ENCODE measurements at regions of chr6 and their contacts with region 1.

Region 1: GRCh38 chr6:26156076-26156849 is 69.0 kb downstream of the HFE start:
- DNase-seq: peak; percentile 92 to 96 (median 93)
- ATAC-seq: peak; percentile 80 to 89 (median 86)
- H3K4me3 ChIP-seq: peak overlapping the region; percentile 49 to 94 (median 78)
- H3K27ac ChIP-seq: peak overlapping the region; percentile 70 to 98 (median 95)
- H3K4me1 ChIP-seq: peaks cover 0 to 30% (median 11%) of the 10 kb centered on the region in 12 donors
- H3K27me3 ChIP-seq: no peaks in the 10 kb centered on the region
- CTCF ChIP-seq: peak in 1 of 12 donors; percentile 7
- POLR2A ChIP-seq: peak; percentile 67 to 99

Region 2: DNA sequence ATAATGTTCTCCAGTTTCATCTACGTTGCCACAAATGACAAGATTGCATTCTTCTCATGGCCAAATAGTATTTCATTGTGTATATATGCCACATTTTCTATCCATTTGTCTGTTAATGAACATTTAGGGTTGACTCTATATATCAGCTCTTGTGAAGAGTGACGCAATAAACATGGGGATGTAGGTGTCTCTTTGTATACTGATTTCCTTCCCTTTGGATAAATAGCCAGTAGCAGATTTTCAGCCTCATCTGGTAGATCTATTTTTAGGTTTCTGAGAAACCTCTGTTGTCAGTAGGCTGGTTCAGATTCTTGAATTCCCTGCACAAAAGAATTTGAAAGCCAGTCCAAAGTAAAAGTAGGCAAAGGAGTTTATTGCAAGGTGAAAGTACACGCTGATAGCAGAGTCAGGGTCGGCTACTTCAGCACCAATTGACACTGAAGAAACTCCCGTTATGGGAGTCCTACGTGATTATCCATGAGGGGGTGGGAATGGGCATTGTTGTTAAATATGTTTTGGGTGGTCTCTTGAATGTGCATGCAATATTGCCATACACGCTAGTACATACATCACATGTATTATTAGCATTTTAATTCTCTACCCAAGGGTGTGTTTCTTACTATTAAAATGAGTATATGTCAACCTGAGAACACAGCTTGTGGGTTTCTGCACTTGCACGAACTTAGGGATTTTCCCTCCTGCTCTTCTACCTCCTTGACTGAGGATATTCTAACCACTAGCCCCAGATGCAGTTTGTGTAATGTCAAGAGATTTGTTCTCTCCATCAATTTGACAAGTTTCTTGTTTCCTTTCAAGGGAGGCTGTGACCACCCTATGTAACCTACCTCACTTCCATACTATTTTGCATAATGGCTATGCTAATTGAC is 211.3 kb before region 1 on chr6:
- intact Hi-C with region 1: no loop called
- DNase-seq: no peak
- ATAC-seq: no peak
- H3K4me3 ChIP-seq: no peak overlapping the region
- H3K27ac ChIP-seq: no peak overlapping the region
- H3K4me1 ChIP-seq: peaks cover 0 to 3% (median 0%) of the 10 kb centered on the region in 12 donors
- H3K27me3 ChIP-seq: no peaks in the 10 kb centered on the region
- CTCF ChIP-seq: no peak
- POLR2A ChIP-seq: no peak

Region 3: DNA sequence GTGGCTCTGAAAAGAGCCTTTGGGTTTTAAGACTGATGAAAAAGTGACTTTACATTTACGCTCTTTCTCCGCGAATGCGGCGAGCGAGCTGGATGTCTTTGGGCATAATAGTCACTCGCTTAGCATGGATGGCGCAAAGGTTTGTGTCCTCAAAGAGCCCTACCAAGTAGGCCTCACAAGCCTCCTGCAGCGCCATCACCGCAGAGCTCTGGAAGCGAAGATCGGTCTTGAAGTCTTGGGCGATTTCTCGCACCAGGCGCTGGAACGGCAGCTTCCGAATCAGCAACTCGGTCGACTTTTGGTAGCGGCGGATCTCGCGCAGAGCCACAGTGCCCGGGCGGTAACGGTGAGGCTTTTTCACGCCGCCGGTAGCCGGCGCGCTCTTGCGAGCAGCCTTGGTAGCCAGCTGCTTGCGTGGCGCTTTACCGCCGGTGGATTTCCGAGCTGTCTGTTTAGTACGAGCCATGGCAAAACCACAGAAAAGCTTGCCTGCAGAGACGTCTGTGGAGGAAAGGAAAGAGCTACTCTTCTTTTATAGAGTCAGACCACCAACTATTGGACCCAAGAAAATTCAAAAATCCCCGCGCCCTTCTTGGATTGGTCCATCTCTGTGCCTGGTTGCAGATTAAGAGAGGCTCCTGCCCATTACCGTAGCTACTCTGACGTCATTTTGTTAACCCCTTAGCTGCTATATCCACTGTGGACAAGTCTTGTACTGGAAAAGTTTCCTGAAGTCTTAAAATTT is 124.5 kb before region 1 on chr6:
- intact Hi-C with region 1: loop called in 2 of 10 experiments (anchors 5 kb)
- DNase-seq: peak; percentile 69 to 87 (median 74)
- ATAC-seq: peak; percentile 82 to 88 (median 86)
- H3K4me3 ChIP-seq: peak overlapping the region; percentile 21 to 69 (median 60)
- H3K27ac ChIP-seq: peak overlapping the region in 8 of 12 donors; percentile 58 to 87 (median 80)
- H3K4me1 ChIP-seq: peaks cover 0 to 39% (median 20%) of the 10 kb centered on the region in 12 donors
- H3K27me3 ChIP-seq: no peaks in the 10 kb centered on the region
- CTCF ChIP-seq: peak in 3 of 12 donors; percentile 18 to 34 (median 27)
- POLR2A ChIP-seq: no peak

Region 4: DNA sequence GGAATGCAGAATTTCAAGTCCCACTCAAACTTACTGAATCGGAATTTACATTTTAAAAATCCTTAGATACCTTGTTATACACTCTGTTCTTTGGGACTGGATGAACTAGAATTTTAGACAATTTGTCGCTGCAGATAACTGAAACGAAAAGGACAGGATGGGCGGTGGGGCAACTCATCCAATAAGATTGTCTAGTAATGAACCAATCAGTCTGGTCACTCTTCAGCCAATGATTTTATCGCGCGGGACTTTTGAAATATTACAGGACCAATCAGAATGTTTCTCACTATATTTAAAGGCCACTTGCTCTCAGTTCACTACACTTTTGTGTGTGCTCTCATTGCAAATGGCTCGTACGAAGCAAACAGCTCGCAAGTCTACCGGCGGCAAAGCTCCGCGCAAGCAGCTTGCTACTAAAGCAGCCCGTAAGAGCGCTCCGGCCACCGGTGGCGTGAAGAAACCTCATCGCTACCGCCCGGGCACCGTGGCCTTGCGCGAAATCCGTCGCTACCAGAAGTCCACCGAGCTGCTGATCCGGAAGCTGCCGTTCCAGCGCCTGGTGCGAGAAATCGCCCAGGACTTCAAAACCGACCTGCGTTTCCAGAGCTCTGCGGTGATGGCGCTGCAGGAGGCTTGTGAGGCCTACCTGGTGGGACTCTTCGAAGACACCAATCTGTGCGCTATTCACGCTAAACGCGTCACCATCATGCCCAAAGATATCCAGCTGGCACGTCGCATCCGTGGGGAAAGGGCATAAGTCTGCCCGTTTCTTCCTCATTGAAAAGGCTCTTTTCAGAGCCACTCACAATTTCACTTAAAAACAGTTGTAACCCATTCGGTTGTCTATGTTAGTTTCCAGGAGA is 111.0 kb before region 1 on chr6:
- intact Hi-C with region 1: loop called in 1 of 10 experiments (anchors 5 kb)
- DNase-seq: peak; percentile 66 to 90 (median 81)
- ATAC-seq: peak; percentile 78 to 83 (median 80)
- H3K4me3 ChIP-seq: peak overlapping the region; percentile 24 to 68 (median 56)
- H3K27ac ChIP-seq: peak overlapping the region; percentile 67 to 97 (median 92)
- H3K4me1 ChIP-seq: peaks cover 0 to 23% (median 12%) of the 10 kb centered on the region in 12 donors
- H3K27me3 ChIP-seq: no peaks in the 10 kb centered on the region
- CTCF ChIP-seq: no peak
- POLR2A ChIP-seq: peak; percentile 5 to 45

Region 5: GRCh38 chr6:26054857-26055669 is 101.2 kb before region 1 on chr6:
- intact Hi-C with region 1: loop called in 1 of 10 experiments (anchors 5 kb)
- DNase-seq: peak; percentile 80 to 92 (median 89)
- ATAC-seq: peak; percentile 79 to 89 (median 84)
- H3K4me3 ChIP-seq: peak overlapping the region; percentile 59 to 80 (median 74)
- H3K27ac ChIP-seq: peak overlapping the region; percentile 81 to 98 (median 95)
- H3K4me1 ChIP-seq: peaks cover 0 to 24% (median 10%) of the 10 kb centered on the region in 12 donors
- H3K27me3 ChIP-seq: no peaks in the 10 kb centered on the region
- CTCF ChIP-seq: peak in 2 of 12 donors; percentile 5 to 22
- POLR2A ChIP-seq: no peak

Region 6: DNA sequence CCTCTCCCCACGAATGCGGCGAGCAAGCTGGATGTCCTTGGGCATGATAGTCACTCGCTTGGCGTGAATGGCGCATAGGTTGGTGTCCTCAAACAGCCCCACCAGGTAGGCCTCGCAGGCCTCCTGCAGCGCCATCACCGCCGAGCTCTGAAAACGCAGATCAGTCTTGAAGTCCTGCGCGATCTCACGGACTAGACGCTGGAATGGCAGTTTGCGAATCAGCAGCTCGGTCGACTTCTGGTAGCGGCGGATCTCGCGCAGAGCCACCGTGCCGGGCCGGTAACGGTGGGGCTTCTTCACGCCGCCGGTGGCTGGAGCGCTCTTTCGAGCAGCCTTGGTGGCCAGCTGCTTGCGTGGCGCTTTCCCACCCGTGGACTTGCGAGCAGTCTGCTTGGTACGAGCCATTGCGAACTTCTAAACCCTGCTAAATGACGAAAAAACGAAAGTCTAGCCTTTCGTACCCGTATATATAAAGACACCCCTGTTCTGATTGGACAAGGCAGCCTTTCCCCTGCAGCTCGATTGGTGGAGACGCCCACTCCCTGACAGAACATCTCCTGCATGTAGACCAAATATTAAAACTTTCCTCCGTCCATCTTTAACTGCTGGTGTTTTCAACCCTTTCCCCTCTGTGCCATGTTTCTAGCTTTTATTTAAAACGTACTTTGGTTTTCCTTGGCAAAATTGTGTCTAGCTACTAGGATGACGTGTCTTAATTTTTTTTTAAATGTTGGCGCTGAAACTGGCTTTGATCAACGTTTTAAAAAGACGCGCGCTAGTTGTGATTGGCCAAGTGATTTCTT is 40.8 kb after region 1 on chr6:
- intact Hi-C with region 1: loop called in 6 of 10 experiments (anchors 2 to 5 kb)
- DNase-seq: peak; percentile 75 to 82 (median 79)
- ATAC-seq: peak; percentile 37 to 79 (median 66)
- H3K4me3 ChIP-seq: peak overlapping the region; percentile 15 to 77 (median 69)
- H3K27ac ChIP-seq: peak overlapping the region in 11 of 12 donors; percentile 60 to 96 (median 84)
- H3K4me1 ChIP-seq: peaks cover 0 to 46% (median 20%) of the 10 kb centered on the region in 12 donors
- H3K27me3 ChIP-seq: peaks cover 0 to 18% (median 0%) of the 10 kb centered on the region in 9 donors
- CTCF ChIP-seq: no peak
- POLR2A ChIP-seq: peak in 1 of 2 donors; percentile 82